SK-N-SH (cell line): ENCODE measurements at regions of chr1 and their contacts with region 1.

Region 1: DNA sequence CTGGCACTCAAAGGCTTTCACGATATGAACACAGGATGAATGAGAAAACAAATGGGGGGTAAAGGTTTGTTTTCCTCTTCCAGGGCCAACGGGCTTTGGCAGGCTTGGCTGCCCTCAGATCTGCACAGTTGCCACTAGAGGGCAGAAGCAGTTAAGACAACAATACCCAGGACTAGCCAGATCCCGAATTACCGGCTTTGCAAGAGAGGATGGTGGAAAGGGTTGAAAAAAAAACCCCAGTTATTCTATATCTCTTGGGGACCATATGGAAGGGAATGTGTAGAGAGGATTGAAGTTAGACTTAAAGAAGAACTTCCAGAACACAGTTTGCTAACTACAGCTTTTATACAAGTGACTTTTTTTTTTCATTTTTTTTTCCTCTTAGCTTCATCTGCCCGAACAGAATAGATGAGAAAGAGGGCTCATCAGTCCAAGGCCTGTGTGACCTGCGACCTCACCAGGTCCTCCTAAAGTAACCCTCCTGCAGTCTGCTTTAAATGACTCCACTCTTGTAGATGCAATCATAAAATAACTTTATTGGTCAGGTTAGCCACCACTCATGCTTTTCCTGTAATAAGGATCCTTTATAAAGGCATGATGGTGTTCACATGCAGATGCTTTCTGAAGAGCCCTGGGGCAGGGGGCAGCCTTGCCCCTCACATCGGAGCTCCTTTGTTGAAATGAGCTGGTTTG is 10.7 kb downstream of the FMOD start:
- DNase-seq: peak; percentile 90
- H3K4me3 ChIP-seq: no peak overlapping the region
- H3K27ac ChIP-seq: no peak overlapping the region
- H3K4me1 ChIP-seq: peaks cover 0 to 11% of the 10 kb centered on the region in 2 experiments; a peak in 2 of 4 replicates
- H3K27me3 ChIP-seq: peaks cover 35% of the 10 kb centered on the region; the same call in 1 of the 2 replicates
- CTCF ChIP-seq: peak; percentile 96
- EP300 ChIP-seq: peak in 1 of 2 experiments; percentile 45; a peak in 2 of 4 replicates
- RAD21 ChIP-seq: peak; percentile 98

Region 2: DNA sequence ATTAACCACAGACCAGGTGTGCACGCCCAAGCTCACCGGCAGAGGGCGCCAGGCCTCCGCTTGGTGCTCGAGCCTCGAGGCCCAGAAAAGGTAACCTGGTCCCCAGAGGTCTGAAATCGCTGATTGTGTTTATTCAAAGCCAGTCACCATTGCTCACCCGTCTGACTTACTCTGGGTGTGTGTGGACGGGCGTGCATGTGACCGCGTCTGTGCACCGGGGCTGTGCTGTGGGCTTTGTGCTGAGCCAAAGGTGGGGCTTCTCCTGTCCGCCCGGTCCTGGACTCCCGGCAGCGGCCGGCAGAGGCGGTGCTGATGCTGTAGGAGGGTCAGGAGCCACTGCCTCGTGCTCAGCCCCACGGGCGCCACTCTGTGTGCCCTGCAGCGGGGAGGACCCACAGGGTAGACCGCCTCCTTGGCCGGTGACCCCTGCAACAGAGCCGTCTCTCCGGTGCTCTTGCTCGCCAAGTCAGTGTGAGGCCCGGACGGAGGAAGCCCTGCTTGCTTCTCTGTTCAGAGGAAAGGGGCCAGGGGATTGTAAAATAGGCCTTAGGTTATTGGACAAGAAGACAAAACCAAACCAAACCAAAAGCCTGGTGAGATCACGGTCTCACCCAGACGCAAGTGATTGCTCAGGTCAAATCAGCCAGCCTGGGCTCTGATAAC is 66.9 kb before region 1 on chr1:
- CTCF ChIA-PET with region 1: interaction called, 817 read pairs
- POLR2A ChIA-PET with region 1: interaction called, 5 read pairs
- DNase-seq: peak; percentile 86
- H3K4me3 ChIP-seq: peak overlapping the region in 1 of 2 experiments; percentile 31; a peak in 1 of 4 replicates
- H3K27ac ChIP-seq: no peak overlapping the region
- H3K4me1 ChIP-seq: peaks cover 0 to 28% of the 10 kb centered on the region in 2 experiments; a peak in 1 of 4 replicates
- H3K27me3 ChIP-seq: no peaks in the 10 kb centered on the region
- CTCF ChIP-seq: peak; percentile 98
- EP300 ChIP-seq: no peak
- RAD21 ChIP-seq: peak; percentile 93

Region 3: DNA sequence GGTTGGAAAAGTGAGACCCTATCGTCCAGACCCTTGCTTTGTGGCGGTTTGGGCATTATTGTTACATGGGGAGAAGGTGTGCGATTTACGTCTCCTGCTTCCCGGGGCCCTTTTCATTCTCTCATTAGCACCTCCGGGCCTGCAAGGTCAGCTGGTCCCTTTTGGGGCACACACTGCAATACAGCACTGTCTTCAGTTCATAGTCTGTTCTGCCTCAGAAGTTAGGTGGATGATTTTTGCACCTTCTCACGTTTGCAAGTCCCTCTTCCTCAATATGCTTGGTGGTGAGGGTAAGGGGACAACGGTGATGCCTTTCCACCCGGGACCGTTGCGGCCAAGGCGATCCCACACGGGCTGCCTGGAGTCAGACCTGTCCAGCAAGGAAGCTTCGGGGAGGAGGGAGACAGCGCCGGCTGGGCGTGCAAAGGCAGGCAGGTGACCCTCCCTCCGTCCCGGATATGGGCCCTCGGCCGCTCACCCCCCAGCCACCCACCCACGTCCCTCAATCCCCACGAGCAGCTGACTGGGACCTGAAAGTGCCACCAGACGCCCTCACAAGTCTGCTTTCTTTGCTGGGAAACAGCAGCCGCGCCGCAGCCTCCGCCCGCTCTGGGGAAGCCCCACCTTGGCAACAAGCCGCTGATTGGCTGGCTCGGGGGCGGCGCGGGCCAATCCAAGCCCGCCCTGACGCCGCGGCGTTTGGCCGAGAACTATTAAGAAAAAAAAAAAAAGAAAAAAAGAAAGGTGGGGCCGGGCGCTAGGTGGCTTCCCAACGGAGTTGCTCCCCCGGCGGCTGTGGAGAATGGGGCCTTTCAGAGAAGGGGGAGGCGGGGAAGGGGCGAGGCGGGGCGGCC is 13.2 kb before region 1 on chr1:
- CTCF ChIA-PET with region 1: interaction called, 123 read pairs
- POLR2A ChIA-PET with region 1: no interaction called
- DNase-seq: peak; percentile 97
- H3K4me3 ChIP-seq: peak overlapping the region; percentile 51 to 71
- H3K27ac ChIP-seq: peak overlapping the region in 1 of 2 experiments; percentile 96; a peak in 2 of 4 replicates
- H3K4me1 ChIP-seq: peaks cover 5 to 43% of the 10 kb centered on the region in 2 experiments; a peak in 2 of 4 replicates
- H3K27me3 ChIP-seq: peaks cover 26% of the 10 kb centered on the region
- CTCF ChIP-seq: no peak
- EP300 ChIP-seq: peak; percentile 29 to 92; a peak in 3 of 4 replicates
- RAD21 ChIP-seq: no peak

Region 4: GRCh38 chr1:203378556-203379245 is 38.4 kb after region 1 on chr1:
- CTCF ChIA-PET with region 1: interaction called, 10 read pairs
- POLR2A ChIA-PET with region 1: no interaction called
- DNase-seq: no peak
- H3K4me3 ChIP-seq: no peak overlapping the region
- H3K27ac ChIP-seq: no peak overlapping the region
- H3K4me1 ChIP-seq: peaks cover 0 to 6% of the 10 kb centered on the region in 2 experiments; a peak in 1 of 4 replicates
- H3K27me3 ChIP-seq: peaks cover 28% of the 10 kb centered on the region
- CTCF ChIP-seq: no peak
- EP300 ChIP-seq: no peak
- RAD21 ChIP-seq: no peak

Region 5: DNA sequence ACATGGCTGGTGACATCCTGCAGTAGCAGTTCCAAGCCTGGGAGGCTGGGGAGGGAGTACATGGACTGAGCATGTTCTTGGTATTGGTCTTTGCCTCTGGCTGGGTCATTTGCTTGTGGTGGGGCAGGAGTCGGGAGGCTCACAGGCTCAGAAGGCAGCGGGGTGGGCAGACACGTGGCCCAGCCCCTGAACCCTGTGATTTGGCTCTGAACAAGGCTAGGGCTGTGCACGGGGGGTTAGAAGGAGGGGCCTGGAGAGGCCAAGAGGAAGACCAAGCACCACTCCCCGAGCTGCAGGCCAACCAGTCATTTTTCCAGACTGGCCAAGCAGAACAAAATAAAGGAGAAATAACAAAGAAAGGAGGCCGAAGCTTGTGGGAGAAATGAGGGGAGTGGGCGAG is 125.7 kb after region 1 on chr1:
- CTCF ChIA-PET with region 1: interaction called, 10 read pairs
- POLR2A ChIA-PET with region 1: no interaction called
- DNase-seq: no peak
- H3K4me3 ChIP-seq: no peak overlapping the region
- H3K27ac ChIP-seq: no peak overlapping the region
- H3K4me1 ChIP-seq: peaks cover 3 to 8% of the 10 kb centered on the region in 2 experiments; a peak in 2 of 4 replicates
- H3K27me3 ChIP-seq: no peaks in the 10 kb centered on the region
- CTCF ChIP-seq: no peak
- EP300 ChIP-seq: no peak
- RAD21 ChIP-seq: no peak

Region 6: DNA sequence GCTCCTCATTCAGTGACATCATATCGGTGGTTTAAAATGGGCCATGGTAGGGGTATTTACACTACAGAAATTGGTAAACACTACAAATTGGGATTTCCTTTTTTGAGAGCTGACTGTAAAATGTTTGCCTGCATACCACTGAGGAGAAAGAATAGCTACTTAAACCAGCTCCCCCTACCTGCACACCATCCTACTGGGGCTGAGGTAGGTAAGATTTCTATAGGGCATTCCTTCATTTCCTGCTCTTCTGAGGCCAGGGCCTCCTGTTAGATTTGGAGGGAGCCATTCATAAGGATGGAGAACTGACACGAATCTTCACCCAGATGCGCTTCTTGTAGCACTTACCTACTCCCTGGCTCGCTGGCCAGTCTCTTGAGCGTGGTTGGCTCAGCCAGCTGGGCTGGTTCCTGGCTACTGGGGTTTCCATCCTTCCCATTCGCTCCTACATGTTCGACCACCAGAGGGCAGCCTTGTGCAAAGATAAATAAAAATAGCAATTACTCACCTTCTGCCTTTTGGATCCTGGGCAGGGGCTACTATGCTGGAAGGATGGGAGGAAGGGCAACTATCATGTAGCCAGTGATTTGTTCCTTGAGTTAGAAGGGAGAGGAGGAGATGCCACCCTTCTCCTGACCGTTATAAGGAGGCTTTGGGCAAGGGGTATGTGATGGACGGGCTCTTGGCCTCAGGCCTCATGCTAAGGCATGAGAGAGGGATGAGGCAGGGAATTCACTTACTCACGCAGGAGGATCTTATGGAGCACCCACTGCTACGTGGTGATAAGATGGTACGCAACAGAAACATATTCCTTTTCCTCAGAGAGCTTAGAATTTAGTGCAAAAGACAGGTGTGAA is 164.4 kb after region 1 on chr1:
- CTCF ChIA-PET with region 1: interaction called, 21 read pairs
- POLR2A ChIA-PET with region 1: no interaction called
- DNase-seq: peak; percentile 86
- H3K4me3 ChIP-seq: no peak overlapping the region; a peak in 1 of 4 replicates
- H3K27ac ChIP-seq: peak overlapping the region in 1 of 2 experiments; percentile 37; a peak in 1 of 4 replicates
- H3K4me1 ChIP-seq: peaks cover 25 to 30% of the 10 kb centered on the region in 2 experiments
- H3K27me3 ChIP-seq: no peaks in the 10 kb centered on the region
- CTCF ChIP-seq: peak; percentile 87
- EP300 ChIP-seq: no peak
- RAD21 ChIP-seq: peak; percentile 92